AG04449 (cell line): ENCODE measurements at regions of chr5 and their contacts with region 1.

Region 1: GRCh38 chr5:58886315-58887207 is 303.7 kb downstream of the RAB3C start:
- DNase-seq: peak; percentile 12
- H3K4me3 ChIP-seq: no peak overlapping the region
- CTCF ChIP-seq: peak; percentile 88

Region 2: DNA sequence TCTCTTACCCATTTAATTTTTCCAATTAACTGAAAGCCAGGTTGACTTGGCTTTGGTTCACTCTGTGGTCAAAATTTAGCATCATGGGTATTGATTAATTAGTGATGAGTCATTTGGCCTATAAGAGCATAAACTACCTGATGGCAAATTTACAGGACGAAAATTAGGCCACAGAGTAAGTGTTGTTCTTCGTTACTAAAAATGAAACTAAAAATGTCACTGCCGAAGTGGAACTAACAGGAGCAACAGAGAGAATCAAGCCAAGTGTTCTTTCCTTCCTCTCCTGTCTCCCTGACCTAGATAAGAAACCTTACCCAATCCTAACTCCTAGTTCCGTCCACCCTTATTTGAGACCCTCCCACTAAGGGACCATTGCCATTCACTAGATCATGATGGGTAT is 126.8 kb before region 1 on chr5:
- CTCF ChIA-PET with region 1: no interaction called
- POLR2A ChIA-PET with region 1: no interaction called
- DNase-seq: no peak
- H3K4me3 ChIP-seq: no peak overlapping the region
- CTCF ChIP-seq: no peak

Region 3: DNA sequence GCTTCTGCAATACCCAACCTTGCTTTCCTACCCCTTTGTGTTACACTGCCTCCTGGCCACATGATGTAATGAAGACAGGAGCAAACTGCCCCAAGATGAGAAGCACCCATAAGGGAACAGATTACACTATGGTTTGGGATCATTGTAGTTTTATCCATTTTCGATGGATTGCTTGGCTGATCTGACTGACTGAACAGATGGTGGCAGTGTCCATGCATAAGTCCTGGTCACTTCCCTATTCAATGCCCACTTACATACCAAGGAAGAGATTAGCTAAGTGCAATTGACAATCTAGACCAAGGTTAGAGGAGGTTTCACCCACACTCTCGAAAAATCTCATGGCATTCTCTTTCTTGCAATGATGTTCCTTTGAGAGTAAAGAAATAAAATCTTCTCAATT is 16.2 kb after region 1 on chr5:
- CTCF ChIA-PET with region 1: interaction called, 42 read pairs
- POLR2A ChIA-PET with region 1: no interaction called
- DNase-seq: no peak
- H3K4me3 ChIP-seq: no peak overlapping the region
- CTCF ChIP-seq: no peak

Region 4: GRCh38 chr5:58983526-58984452 is 97.2 kb after region 1 on chr5:
- CTCF ChIA-PET with region 1: interaction called, 17 read pairs
- POLR2A ChIA-PET with region 1: no interaction called
- DNase-seq: no peak
- H3K4me3 ChIP-seq: no peak overlapping the region
- CTCF ChIP-seq: no peak

Region 5: GRCh38 chr5:59007460-59008063 is 121.0 kb after region 1 on chr5:
- CTCF ChIA-PET with region 1: interaction called, 147 read pairs
- POLR2A ChIA-PET with region 1: no interaction called
- DNase-seq: no peak
- H3K4me3 ChIP-seq: no peak overlapping the region
- CTCF ChIP-seq: no peak

Region 6: GRCh38 chr5:59174248-59174844 is 287.8 kb after region 1 on chr5:
- CTCF ChIA-PET with region 1: interaction called, 193 read pairs
- POLR2A ChIA-PET with region 1: no interaction called
- DNase-seq: peak; percentile 59
- H3K4me3 ChIP-seq: no peak overlapping the region
- CTCF ChIP-seq: peak; percentile 75

Region 7: DNA sequence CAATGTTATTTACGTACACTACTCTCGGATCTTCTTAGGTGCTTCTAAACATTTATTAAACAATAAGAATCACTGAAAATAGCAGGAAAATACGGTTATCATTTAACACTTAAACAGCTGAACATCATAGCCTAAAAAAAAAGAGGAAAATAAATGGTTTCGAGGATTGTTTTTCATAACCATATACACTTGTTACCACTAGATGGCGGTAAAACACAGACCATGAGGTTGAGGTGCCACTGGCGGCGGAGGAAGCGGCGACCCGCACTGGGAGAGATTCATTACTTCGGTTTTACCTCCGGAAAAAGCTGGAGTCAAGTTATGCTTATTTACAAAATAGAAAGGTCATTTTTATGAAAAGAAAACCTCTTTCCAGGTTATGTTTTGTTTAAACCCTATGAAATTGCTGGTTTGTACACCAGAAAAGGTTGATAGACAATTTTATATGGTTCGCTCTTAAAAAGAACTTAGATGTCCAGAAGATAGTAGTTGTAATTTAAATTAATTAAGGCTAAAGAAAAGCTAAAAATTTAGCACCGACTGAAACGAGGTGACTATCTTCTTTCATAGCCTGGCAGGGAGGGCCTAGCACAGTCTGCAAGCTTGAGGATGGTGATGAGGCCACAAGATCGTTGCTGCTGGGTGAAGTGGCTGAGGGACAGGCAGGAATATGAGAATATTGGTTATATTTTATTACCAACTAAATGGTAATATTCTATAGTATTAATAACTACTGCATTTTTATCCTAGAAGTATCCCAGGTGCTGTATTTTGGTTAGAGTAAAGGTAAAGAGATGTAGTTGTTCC is 302.1 kb after region 1 on chr5:
- CTCF ChIA-PET with region 1: interaction called, 25 read pairs
- POLR2A ChIA-PET with region 1: no interaction called
- DNase-seq: no peak
- H3K4me3 ChIP-seq: no peak overlapping the region
- CTCF ChIP-seq: peak; percentile 39

Region 8: GRCh38 chr5:59390074-59390659 is 503.6 kb after region 1 on chr5:
- CTCF ChIA-PET with region 1: no interaction called
- POLR2A ChIA-PET with region 1: no interaction called
- DNase-seq: no peak
- H3K4me3 ChIP-seq: no peak overlapping the region
- CTCF ChIP-seq: peak; percentile 26